ENCODE measurements at regions of chr7 and their contacts with region 1.

Region 1: GRCh38 chr7:2232766-2233520 is at the start of gene MAD1L1:
- DNase-seq: peak; percentile 87 to 94
- H3K4me3 ChIP-seq: peak within 1 kb of the TSS; percentile 88 to 98
- H3K27ac ChIP-seq: peak within 1 kb of the TSS; percentile 75 to 76
- H3K4me1 ChIP-seq: peaks cover 0 to 31% (median 14%) of the 10 kb centered on the region in 4 donors
- H3K27me3 ChIP-seq: no peaks in the 10 kb centered on the region
- CTCF ChIP-seq: no peak

Region 2: GRCh38 chr7:2314209-2314955 is 81.4 kb after region 1 on chr7 and contains the start of gene SNX8:
- intact Hi-C with region 1: loop called (anchors 10 kb)
- DNase-seq: peak; percentile 77 to 90
- H3K4me3 ChIP-seq: peak within 1 kb of the TSS; percentile 95
- H3K27ac ChIP-seq: peak within 1 kb of the TSS; percentile 76 to 77
- H3K4me1 ChIP-seq: peaks cover 0 to 10% (median 6%) of the 10 kb centered on the region in 4 donors
- H3K27me3 ChIP-seq: no peaks in the 10 kb centered on the region
- CTCF ChIP-seq: no peak

Measured in tibial artery (tissue), 4 donors.